Mammary epithelial cell (primary cell): ENCODE measurements at regions of chr17 and their contacts with region 1.

Region 1: DNA sequence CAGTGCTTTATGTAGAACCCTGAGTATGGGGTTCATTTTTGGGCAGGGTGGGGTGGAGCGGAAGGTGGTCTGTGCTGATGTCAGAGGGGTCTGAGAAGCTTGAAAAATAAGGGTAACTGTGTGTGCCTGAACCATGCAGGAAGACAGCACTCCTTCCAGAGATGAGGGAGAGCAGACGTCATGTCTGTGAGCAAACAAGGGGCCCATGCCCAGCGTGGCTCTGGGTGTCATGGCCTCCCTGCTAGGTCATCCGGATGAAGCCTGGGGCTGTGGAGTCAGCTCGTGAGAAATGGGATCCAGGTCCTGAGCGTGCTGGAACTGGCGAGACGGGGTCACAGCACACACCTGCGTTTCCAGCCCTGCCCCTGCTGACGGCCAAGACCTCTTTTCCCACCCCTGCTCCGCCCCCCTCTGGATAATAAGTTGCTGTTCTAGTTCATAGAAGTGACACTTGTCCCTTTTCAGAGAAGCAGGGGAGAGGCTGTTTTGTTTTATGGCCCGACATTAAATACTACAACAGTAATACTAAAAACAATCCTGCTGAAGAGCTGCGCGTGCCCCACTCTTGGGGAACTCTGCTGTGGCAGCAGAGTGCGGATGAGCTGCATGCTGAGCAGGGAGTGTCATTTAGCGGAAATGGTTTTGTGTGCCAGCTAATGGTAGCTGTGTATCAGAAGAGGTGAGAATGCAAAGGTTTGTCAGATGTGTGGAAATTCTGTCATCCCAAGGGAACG is 92.6 kb downstream of the RPTOR start:
- DNase-seq: no peak
- H3K4me3 ChIP-seq: no peak overlapping the region
- H3K27ac ChIP-seq: no peak overlapping the region
- H3K4me1 ChIP-seq: no peaks in the 10 kb centered on the region
- H3K27me3 ChIP-seq: no peaks in the 10 kb centered on the region
- CTCF ChIP-seq: no peak

Region 2: DNA sequence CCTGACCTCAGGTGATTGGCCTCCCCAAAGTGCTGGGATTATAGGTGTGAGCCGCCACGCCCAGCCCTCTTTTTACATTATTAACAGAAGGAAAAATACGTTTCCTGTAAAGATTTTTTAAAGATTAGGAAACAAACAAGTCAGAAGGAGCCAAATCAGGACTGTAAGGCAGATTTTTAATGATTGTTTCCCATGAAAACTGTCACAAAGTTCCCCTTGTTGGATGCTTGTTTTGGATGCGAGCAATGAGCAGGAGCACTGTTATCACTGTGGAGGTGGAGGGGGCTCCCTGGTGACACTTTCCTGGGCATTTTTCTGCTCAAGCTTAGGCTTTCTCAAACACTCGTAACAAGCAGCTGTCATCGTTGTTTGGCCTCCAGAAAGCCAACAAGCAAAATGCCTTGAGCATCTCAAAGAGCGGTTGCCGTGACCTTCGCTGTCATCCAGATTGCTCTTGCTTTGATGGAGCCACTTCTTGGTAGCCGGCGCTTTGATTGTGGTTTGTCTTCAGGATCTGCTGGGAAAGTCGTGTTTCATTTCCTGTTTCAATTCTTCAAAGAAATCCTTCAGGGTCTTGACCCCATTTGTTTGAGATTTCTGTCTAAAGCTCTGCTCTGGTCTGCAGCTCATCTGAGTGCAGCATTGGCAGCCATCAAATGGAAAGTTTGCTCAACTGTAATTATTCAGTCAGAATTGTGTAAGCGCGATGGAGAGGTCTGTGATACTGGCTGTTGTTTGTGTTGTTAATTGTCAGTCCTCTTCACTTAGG is 36.1 kb after region 1 on chr17:
- CTCF ChIA-PET with region 1: no interaction called
- dilution Hi-C with region 1: loop called (anchors 5 kb)
- in situ Hi-C with region 1: no loop called
- intact Hi-C with region 1: no loop called
- DNase-seq: no peak
- H3K4me3 ChIP-seq: no peak overlapping the region
- H3K27ac ChIP-seq: no peak overlapping the region
- H3K4me1 ChIP-seq: peaks cover 11% of the 10 kb centered on the region
- H3K27me3 ChIP-seq: no peaks in the 10 kb centered on the region
- CTCF ChIP-seq: no peak

Region 3: DNA sequence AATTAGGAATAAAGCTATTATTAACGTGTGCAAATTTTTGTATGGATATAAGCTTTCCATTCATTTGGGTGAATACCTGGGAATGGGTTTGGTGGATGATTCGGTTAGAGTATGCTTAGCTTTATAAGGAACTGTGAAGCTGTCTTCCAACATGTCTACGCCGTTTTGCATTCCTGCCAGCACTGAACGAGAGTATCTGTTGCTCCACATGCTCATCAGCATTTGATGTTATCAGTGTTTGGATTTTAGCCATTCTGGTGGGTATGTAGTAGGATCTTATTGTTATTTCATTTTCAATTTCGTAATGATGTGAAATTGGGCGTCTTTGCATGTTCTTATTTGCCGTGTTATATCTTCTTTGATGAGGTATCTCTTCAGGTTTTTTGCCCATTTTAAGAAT is 75.4 kb after region 1 on chr17:
- CTCF ChIA-PET with region 1: no interaction called
- dilution Hi-C with region 1: loop called (anchors 5 kb)
- in situ Hi-C with region 1: no loop called
- intact Hi-C with region 1: no loop called
- DNase-seq: no peak
- H3K4me3 ChIP-seq: no peak overlapping the region
- H3K27ac ChIP-seq: no peak overlapping the region
- H3K4me1 ChIP-seq: no peaks in the 10 kb centered on the region
- H3K27me3 ChIP-seq: no peaks in the 10 kb centered on the region
- CTCF ChIP-seq: no peak

Region 4: GRCh38 chr17:80737106-80738019 is 100.1 kb after region 1 on chr17:
- CTCF ChIA-PET with region 1: no interaction called
- dilution Hi-C with region 1: loop called (anchors 5 kb)
- in situ Hi-C with region 1: no loop called
- intact Hi-C with region 1: no loop called
- DNase-seq: no peak
- H3K4me3 ChIP-seq: no peak overlapping the region
- H3K27ac ChIP-seq: no peak overlapping the region
- H3K4me1 ChIP-seq: no peaks in the 10 kb centered on the region
- H3K27me3 ChIP-seq: no peaks in the 10 kb centered on the region
- CTCF ChIP-seq: no peak